ENCODE measurements at regions of chr3 and their contacts with region 1.

Region 1: GRCh38 chr3:86990734-86991481 is at the start of gene VGLL3:
- DNase-seq: peak; percentile 95
- total RNA-seq, gene VGLL3: 87.2 to 151 TPM

Region 2: DNA sequence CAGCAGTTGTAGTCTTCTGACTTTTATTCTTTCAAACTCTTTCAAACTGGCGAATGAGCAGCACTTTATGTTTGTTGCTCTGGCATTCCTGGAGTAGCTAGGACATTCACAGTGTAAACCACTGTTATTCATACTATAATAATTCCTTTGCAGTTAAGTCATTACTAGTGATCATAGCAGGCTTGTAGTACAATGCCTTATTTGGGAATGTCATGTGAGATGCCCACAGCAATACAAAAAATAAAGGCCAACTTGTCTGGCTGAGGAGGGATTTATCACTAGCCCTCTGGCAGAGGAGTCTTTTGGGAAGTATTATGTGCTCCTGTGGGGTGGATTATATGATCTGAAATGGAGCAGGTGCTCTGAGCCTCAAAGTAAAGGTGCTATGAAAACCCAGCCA is 197.1 kb before region 1 on chr3:
- intact Hi-C with region 1: loop called in 1 of 2 experiments (anchors 10 kb)
- DNase-seq: no peak

Region 3: GRCh38 chr3:86967062-86967461 is 23.8 kb before region 1 on chr3:
- intact Hi-C with region 1: no loop called
- DNase-seq: no peak

Region 4: GRCh38 chr3:87082796-87083440 is 92.0 kb after region 1 on chr3:
- intact Hi-C with region 1: loop called in 1 of 2 experiments (anchors 10 kb)
- DNase-seq: no peak

Measured in posterior vena cava (tissue), 2 donors.